Heart right ventricle (tissue), 16 donors: ENCODE measurements at regions of chr11 and their contacts with region 1.

Region 1: DNA sequence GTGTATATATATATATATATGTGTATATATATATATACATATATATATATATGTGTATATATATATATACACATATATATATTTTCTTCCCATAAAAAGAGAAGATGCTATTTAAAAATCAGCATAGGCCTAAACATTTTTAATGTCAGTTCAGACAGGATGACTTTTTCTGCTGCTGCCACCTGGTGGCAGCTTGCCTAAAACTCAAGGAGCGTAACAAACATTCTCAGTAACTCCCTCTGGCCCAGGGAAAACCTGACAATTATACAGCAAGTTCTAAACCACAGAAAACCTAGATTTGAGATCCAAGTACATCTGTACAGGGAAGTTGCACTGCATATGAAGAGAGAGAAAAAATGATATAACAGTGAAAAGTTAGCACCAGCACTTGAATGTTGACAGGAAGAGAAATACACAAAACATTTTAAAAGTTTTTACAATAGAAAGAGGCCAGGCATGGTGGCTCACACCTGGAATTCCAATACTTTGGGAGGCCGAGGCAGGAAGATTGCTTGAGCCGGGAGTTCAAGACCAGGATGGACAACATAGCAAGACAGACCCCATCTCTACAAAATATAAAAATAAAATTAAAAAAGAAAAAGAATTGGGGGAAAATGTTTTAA is 16.6 kb downstream of the OR8A1 start:
- DNase-seq: peak; percentile 41 to 56
- ATAC-seq: no peak
- H3K4me3 ChIP-seq: no peak overlapping the region
- H3K27ac ChIP-seq: no peak overlapping the region
- H3K4me1 ChIP-seq: no peaks in the 10 kb centered on the region
- H3K27me3 ChIP-seq: peaks cover 0 to 14% (median 0%) of the 10 kb centered on the region in 7 donors
- CTCF ChIP-seq: peak; percentile 31 to 78 (median 71)

Region 2: GRCh38 chr11:124070915-124071635 is 515.3 kb before region 1 on chr11:
- intact Hi-C with region 1: loop called in 9 of 10 experiments (anchors 5 to 10 kb)
- DNase-seq: peak; percentile 59 to 60
- ATAC-seq: peak in 3 of 8 donors; percentile 47 to 57 (median 50)
- H3K4me3 ChIP-seq: no peak overlapping the region
- H3K27ac ChIP-seq: peak overlapping the region in 1 of 10 donors; percentile 18
- H3K4me1 ChIP-seq: peaks cover 0 to 23% (median 4%) of the 10 kb centered on the region in 9 donors
- H3K27me3 ChIP-seq: peaks cover 0 to 78% (median 48%) of the 10 kb centered on the region in 7 donors
- CTCF ChIP-seq: peak; percentile 55 to 90 (median 77)

Region 3: DNA sequence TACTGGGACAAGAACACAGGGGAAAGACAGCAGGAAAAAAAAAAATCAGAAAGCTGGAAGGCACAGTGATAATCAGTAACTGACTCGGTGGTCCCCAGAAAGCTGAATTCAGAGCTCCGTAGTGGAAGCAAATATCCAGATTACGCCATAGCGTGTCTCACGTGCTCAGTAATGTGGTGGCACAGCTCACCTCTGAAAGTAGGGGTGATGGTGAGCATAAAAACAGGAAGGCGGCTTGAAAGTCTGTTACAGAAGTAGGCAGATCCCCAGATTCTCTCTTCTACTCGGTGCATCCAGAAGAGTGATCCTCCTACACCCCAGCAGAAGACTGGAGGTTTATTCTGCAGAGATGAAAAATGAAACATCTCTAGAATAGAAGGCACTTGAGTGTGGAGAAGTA is 176.4 kb before region 1 on chr11:
- intact Hi-C with region 1: loop called in 8 of 10 experiments (anchors 1 to 5 kb)
- DNase-seq: no peak
- ATAC-seq: no peak
- H3K4me3 ChIP-seq: no peak overlapping the region
- H3K27ac ChIP-seq: no peak overlapping the region
- H3K4me1 ChIP-seq: no peaks in the 10 kb centered on the region
- H3K27me3 ChIP-seq: peaks cover 0 to 22% (median 0%) of the 10 kb centered on the region in 7 donors
- CTCF ChIP-seq: no peak

Region 4: GRCh38 chr11:124415356-124415923 is 170.9 kb before region 1 on chr11:
- intact Hi-C with region 1: loop called (anchors 1 to 10 kb)
- DNase-seq: no peak
- ATAC-seq: no peak
- H3K4me3 ChIP-seq: no peak overlapping the region
- H3K27ac ChIP-seq: no peak overlapping the region
- H3K4me1 ChIP-seq: no peaks in the 10 kb centered on the region
- H3K27me3 ChIP-seq: peaks cover 0 to 17% (median 0%) of the 10 kb centered on the region in 7 donors
- CTCF ChIP-seq: peak in 8 of 9 donors; percentile 61 to 79 (median 76)

Region 5: DNA sequence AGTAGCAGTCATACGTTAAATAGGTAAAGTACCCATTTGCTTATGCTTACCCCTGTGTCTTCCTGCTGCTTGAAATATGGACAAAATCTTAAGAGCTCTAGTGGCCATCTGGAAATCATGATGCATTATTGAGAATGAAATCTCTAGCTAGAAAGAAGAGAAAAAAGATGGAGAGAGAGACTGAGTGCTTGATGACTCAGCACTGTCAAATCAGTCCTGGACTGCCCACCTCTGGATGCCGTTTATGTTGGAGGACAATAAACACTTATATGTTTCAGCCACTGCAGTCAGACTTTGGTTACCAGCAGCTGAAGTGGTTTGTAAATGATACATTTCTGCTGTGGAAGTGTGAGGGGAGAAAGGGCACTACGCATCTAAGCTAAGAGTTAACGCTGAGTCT is 165.3 kb before region 1 on chr11:
- intact Hi-C with region 1: loop called in 4 of 10 experiments (anchors 2 to 10 kb)
- DNase-seq: no peak
- ATAC-seq: no peak
- H3K4me3 ChIP-seq: no peak overlapping the region
- H3K27ac ChIP-seq: no peak overlapping the region
- H3K4me1 ChIP-seq: no peaks in the 10 kb centered on the region
- H3K27me3 ChIP-seq: peaks cover 0 to 13% (median 0%) of the 10 kb centered on the region in 7 donors
- CTCF ChIP-seq: no peak

Region 6: DNA sequence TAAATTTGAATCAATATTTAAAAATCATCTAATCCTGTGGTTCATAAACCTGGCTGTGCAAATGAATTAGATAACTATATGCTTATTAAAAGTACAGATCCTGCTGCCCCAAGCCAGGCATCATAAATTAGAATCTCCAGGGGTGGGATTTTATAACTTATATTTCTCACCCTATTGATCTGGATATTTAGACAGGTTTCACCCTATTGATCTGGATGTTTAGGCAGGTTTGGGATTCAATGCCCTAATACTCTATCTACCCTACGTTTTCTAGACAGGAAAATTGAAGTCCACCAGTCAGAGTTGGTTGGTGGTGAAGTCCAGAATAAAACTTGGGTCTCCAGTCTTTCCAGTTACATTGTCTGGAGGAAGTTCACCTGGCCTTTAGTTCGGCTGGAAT is 143.5 kb before region 1 on chr11:
- intact Hi-C with region 1: loop called in 1 of 10 experiments (anchors 1 kb)
- DNase-seq: no peak
- ATAC-seq: no peak
- H3K4me3 ChIP-seq: no peak overlapping the region
- H3K27ac ChIP-seq: no peak overlapping the region
- H3K4me1 ChIP-seq: no peaks in the 10 kb centered on the region
- H3K27me3 ChIP-seq: peaks cover 0 to 6% (median 0%) of the 10 kb centered on the region in 7 donors
- CTCF ChIP-seq: no peak

Region 7: DNA sequence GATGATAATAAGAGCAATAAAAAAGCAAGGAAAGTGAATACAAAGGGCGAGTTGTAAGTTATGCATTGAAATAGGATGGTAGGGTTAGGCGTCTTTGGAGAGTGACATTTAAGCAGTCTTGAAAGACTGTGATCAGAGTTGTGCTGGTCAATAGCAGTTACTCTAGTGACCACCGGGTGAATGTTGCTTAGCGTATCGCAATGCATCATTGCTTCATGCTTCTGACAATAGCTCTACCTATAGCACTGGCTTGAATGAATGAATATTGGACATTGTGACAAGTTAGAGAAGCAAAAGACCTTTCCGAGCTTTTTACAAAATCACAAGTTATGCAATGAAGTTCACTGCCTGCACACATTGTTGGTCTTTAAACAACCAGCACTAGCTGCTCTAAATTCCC is 35.2 kb before region 1 on chr11:
- intact Hi-C with region 1: no loop called
- DNase-seq: no peak
- ATAC-seq: no peak
- H3K4me3 ChIP-seq: no peak overlapping the region
- H3K27ac ChIP-seq: no peak overlapping the region
- H3K4me1 ChIP-seq: no peaks in the 10 kb centered on the region
- H3K27me3 ChIP-seq: no peaks in the 10 kb centered on the region
- CTCF ChIP-seq: no peak

Region 8: DNA sequence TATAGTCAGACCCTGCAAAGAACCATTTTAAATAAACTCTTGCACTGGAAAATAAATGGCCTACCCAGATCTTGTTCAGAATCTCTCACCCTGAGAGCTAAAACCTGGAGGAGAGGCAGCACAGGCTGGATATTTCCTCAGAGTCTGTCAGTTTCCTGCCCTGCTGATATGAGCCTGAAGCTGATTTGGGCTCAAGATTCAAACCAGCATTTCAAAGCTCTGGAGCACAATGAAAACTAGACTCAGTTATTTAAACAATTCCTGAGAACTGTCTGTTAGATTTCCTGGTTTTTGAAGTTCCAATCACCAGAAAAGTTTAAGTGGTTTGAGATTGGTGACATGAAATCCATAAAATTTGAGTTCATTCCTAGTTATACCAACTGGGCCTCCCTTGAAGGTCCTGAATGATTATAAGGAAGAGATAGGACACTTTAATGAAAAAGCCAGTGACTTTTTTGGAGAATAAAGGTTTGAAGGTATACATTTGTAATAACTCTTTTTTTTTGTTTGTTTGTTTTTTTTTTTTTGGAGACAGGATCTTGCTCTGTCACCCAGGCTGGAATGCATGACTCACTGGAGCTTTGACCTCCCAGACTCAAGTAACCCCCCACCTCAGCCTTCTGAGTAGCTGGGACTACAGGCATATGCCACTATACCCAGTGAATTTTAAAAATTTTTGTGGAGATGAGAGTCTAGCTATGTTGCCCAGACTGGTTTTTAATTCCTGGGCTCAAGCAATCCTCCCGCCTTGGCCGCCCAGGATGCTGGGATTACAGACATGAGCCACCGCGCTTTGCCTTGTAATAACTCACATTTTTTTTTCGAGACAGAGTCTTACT is 183.7 kb after region 1 on chr11:
- intact Hi-C with region 1: no loop called
- DNase-seq: no peak
- ATAC-seq: no peak
- H3K4me3 ChIP-seq: no peak overlapping the region
- H3K27ac ChIP-seq: no peak overlapping the region
- H3K4me1 ChIP-seq: peaks cover 0 to 4% (median 0%) of the 10 kb centered on the region in 9 donors
- H3K27me3 ChIP-seq: no peaks in the 10 kb centered on the region
- CTCF ChIP-seq: no peak

Region 9: GRCh38 chr11:125102510-125102909 is 516.2 kb after region 1 on chr11:
- intact Hi-C with region 1: no loop called
- DNase-seq: no peak
- ATAC-seq: no peak
- H3K4me3 ChIP-seq: no peak overlapping the region
- H3K27ac ChIP-seq: no peak overlapping the region
- H3K4me1 ChIP-seq: no peaks in the 10 kb centered on the region
- H3K27me3 ChIP-seq: no peaks in the 10 kb centered on the region
- CTCF ChIP-seq: no peak